Activated CD4-positive, alpha-beta T cell treated with anti-CD3 and anti-CD28 coated beads for 36 hours (primary cell): ENCODE measurements at regions of chr22 and their contacts with region 1.

Region 1: DNA sequence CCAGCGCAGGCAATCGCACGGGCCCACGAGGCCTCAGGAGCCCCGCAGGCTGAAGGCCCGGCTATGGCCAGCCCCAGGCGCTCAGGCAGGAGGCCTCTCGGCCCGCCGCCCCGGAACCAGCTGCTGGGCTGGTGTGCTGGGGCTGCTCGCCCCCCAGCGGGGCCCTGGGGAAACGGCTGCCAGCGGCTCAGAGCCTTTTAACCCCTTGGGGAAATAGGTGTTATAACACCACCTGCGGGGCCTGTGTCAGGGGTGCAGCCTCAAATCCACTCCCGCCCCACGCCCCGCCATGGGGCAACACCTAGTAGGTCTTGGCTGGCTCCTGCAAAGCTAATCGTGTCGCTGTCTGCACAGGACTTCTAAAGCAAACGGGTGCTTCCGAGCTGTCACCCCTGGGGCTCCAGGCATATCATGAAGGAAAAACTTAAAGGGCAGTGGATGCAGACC is 237.4 kb downstream of the TTC28 start:
- DNase-seq: peak; percentile 89
- ATAC-seq: peak; percentile 92
- H3K4me3 Mint-ChIP-seq: peak overlapping the region; percentile 77
- H3K27ac Mint-ChIP-seq: peak overlapping the region; percentile 86
- H3K4me1 Mint-ChIP-seq: peaks cover 27% of the 10 kb centered on the region
- H3K27me3 Mint-ChIP-seq: peaks cover 6% of the 10 kb centered on the region

Region 2: GRCh38 chr22:28019881-28020871 is 422.1 kb before region 1 on chr22:
- CTCF ChIA-PET with region 1: interaction called, 11 read pairs
- POLR2A ChIA-PET with region 1: no interaction called
- intact Hi-C with region 1: loop called (anchors 1 to 5 kb)
- DNase-seq: peak; percentile 81
- ATAC-seq: peak; percentile 87
- H3K4me3 Mint-ChIP-seq: no peak overlapping the region
- H3K27ac Mint-ChIP-seq: no peak overlapping the region
- H3K4me1 Mint-ChIP-seq: no peaks in the 10 kb centered on the region
- H3K27me3 Mint-ChIP-seq: no peaks in the 10 kb centered on the region

Region 3: DNA sequence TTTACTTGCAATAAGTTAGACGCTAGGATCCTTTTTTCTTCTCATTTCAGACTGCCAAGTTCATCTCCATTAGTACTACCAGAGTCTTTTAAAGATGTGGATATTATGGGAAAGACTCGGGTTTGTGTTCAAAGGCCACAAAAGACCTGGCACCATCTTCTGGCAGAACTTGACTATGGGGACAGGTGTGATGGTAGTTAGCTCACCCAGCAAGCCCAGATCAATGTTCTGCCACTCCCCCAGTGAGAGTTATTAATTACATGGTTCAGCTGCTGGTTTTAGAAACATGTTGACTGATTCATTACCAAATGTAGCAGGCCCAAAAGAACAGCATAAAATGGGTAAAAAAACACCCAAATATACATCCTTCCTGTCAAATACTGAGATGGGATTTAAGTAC is 189.7 kb before region 1 on chr22:
- CTCF ChIA-PET with region 1: interaction called, 3 read pairs
- POLR2A ChIA-PET with region 1: no interaction called
- intact Hi-C with region 1: loop called in 1 of 2 experiments (anchors 2 kb)
- DNase-seq: no peak
- ATAC-seq: no peak
- H3K4me3 Mint-ChIP-seq: no peak overlapping the region
- H3K27ac Mint-ChIP-seq: no peak overlapping the region
- H3K4me1 Mint-ChIP-seq: no peaks in the 10 kb centered on the region
- H3K27me3 Mint-ChIP-seq: no peaks in the 10 kb centered on the region

Region 4: DNA sequence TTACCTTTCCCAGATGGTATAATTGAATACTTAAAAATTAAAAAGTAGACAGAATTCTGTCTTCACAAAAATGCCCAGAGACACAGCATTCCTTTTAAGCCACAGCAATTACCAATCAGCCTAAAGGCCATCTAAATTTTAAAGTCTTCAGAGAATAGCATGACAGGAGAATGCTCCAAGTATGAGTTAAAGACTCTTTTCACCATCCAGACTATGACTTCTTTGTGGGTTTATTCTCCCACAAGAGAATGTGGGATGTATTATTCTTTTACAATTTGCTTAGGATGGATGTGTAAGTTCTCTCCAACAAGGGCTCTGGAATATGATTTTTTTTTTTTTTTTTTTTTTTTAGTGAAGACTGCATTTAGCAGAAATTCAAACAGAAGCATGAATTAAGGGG is 12.6 kb before region 1 on chr22:
- CTCF ChIA-PET with region 1: interaction called, 12 read pairs
- POLR2A ChIA-PET with region 1: no interaction called
- intact Hi-C with region 1: no loop called
- DNase-seq: no peak
- ATAC-seq: no peak
- H3K4me3 Mint-ChIP-seq: no peak overlapping the region
- H3K27ac Mint-ChIP-seq: no peak overlapping the region
- H3K4me1 Mint-ChIP-seq: no peaks in the 10 kb centered on the region
- H3K27me3 Mint-ChIP-seq: peaks cover 7% of the 10 kb centered on the region

Region 5: GRCh38 chr22:28741758-28742561 is 299.7 kb after region 1 on chr22 and contains the starts of genes CHEK2 and HSCB:
- CTCF ChIA-PET with region 1: no interaction called
- POLR2A ChIA-PET with region 1: no interaction called
- intact Hi-C with region 1: loop called in 1 of 2 experiments (anchors 1 kb)
- DNase-seq: peak; percentile 99
- ATAC-seq: peak; percentile 93
- H3K4me3 Mint-ChIP-seq: peak within 1 kb of the TSS; percentile 81
- H3K27ac Mint-ChIP-seq: peak within 1 kb of the TSS; percentile 83
- H3K4me1 Mint-ChIP-seq: peaks cover 32% of the 10 kb centered on the region
- H3K27me3 Mint-ChIP-seq: no peaks in the 10 kb centered on the region
- total RNA-seq, gene CHEK2: 37.5 to 41.3 TPM
- total RNA-seq, gene HSCB: 16.5 to 18.5 TPM